Cardiac septum (tissue), 1 donor: ENCODE measurements at regions of chr3 and their contacts with region 1.

Region 1: GRCh38 chr3:153285194-153285641 is 123.2 kb downstream of the RAP2B start:
- DNase-seq: no peak

Region 2: GRCh38 chr3:153052096-153052460 is 233.1 kb before region 1 on chr3:
- intact Hi-C with region 1: loop called (anchors 5 kb)
- DNase-seq: no peak

Region 3: GRCh38 chr3:153221748-153222162 is 63.5 kb before region 1 on chr3:
- intact Hi-C with region 1: loop called (anchors 5 kb)
- DNase-seq: peak; percentile 86

Region 4: DNA sequence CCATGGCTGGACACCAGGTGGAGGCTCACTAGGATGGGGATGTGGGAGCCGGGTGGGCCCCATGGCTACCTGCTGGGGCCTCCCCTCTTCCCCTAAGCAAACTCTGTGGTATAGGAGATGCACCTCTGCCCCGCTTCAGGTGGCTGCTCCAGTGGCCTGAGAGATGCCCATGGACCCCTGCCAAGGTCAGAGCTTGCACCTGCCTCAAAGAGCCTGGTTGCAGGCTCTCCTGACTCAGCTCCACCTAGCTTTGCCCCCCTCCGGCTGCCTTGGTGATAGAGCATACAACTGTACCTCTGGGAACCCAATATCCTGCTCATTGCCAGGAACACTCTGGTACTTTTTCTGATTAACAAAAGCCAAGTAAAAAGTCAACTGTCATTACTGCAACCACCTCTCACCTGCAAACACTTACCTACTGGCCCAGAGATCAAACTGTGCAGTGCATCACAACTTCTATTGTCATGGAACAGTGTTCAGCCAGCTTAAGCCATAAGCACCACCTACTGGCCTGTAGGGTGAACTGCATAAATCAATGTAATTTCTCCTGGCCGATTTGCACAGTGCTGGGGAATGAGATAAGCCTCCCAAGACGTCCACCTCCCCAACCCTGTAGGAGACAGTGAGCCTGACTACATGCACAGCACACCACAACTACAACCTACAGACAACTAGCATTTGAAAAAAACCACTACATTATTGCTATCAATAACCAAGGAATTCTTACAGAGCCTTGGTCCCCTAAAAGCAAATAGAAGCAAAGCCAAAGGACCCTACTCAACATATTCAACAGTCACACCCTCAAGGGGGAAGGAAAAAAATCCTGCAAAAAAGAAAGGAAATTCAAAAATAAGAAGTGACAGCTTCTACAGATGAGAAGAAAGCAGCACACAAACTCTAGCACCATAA is 483.6 kb after region 1 on chr3:
- intact Hi-C with region 1: loop called (anchors 5 kb)
- DNase-seq: no peak